Astrocyte of the cerebellum (primary cell): ENCODE measurements at regions of chr18 and their contacts with region 1.

Region 1: DNA sequence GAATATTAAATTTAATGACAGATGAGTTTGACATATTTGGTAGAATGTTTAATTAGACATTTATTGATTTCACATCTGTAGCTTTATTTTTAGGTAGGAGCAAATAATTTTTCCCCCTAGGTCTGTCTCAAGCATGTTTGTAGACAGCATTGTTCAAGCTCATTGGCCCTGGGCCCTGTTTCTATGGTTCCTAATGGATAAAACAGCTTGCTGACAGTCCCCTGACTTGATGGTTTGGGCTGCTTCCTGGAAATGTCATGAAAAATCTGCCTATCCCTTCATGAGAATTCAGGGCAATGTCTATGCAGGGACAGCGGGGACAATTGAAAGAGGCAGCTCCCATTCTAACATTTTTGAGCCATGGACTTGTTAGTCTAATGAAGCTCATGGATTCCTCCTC is 14.6 kb upstream of the MEP1B start:
- DNase-seq: no peak
- H3K4me3 ChIP-seq: no peak overlapping the region
- CTCF ChIP-seq: no peak

Region 2: GRCh38 chr18:32238635-32239268 is 63.5 kb after region 1 on chr18:
- in situ Hi-C with region 1: loop called (anchors 5 kb)
- DNase-seq: no peak
- H3K4me3 ChIP-seq: no peak overlapping the region
- CTCF ChIP-seq: no peak

Region 3: GRCh38 chr18:32264401-32264800 is 89.1 kb after region 1 on chr18:
- in situ Hi-C with region 1: no loop called
- DNase-seq: no peak
- H3K4me3 ChIP-seq: no peak overlapping the region
- CTCF ChIP-seq: no peak